IMR-90 (cell line): ENCODE measurements at regions of chr3 and their contacts with region 1.

Region 1: DNA sequence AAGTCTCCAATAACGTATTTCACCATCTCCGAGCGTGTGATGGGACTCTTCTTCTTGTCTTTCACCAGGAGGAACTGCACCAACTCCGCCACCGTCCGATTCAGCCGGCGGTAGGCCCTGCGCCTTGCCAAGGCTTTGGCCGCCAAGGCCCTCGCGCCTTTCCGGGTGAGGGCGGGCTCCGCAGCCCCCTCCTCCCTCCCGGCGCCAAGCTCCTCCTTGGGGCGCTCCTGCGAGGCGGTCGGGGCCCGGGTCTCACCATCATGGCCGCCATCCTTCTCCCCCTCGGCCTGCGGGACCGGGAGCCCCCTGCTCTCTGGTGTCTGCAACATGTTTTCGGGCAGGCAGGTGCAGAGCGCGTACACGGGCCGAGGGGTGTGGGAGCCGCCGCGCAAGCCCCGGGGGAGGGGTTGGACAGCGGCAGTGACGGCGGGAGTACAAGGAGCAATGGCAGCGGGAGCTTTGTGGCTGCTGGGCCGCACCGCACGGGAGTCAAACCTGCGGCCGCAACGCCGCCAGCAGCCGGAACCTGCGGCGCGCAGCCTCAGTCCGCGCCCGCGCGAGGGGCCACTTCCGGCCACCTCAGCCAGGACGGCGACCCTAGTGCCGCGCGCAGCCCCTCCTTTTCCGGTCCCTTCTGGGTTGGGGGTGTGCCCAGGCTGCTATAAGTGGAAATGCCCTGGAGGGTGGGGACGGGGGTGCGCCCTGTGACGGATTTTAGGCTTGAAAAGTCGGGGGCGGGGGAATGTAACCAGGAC is at the start of gene MAGEF1:
- DNase-seq: peak; percentile 81
- ATAC-seq: peak; percentile 89
- H3K4me3 ChIP-seq: peak within 1 kb of the TSS; percentile 74
- H3K27ac ChIP-seq: peak within 1 kb of the TSS; percentile 88
- H3K4me1 ChIP-seq: peaks cover 11% of the 10 kb centered on the region
- H3K27me3 ChIP-seq: no peaks in the 10 kb centered on the region
- CTCF ChIP-seq: no peak
- POLR2A ChIP-seq: peak; percentile 56; the same call in 1 of the 2 replicates
- RAD21 ChIP-seq: no peak
- total RNA-seq, gene MAGEF1: 10.6 and 16.4 TPM in 2 replicates

Region 2: DNA sequence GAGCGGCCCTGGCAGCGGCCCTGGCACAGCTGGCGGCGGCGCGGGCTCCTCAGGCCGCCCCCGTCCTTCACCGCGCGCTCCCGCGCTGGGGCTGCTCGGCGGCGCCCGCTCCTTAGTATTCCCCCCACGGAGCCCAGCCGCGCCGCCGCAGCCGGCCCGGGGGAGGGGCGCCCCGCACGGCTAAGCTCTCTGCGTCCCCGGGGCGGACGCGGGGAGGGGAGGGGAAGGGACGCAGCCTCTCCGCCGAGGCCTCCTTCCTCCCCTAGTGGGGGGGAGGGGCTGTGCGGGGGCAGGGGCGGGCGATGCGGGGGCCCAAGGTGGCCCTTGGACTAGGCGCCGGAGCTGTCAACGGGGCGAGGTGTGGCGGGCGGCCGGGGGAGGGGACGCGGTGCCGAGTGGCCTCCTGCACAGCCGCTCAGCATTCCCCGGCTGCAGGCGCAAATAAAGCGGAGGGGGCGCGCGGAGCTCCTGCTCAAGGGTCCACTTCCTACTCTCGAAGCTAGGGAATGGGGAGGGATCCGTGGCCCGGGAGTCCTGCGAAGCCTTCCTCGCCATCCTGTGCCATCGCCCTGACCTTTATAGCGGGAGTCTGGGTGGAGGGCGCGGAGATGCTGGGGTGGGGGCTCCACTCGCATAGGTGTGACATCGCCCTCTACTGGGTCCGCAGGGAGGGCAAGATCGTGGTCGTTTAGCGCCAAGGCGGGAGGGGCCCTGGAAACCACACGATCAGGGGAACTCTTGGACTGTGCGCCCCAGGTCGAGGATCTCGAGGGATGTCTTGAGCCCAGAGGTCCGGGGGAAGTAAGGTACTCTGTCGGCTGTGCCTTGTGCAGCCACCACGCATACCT is 127.9 kb before region 1 on chr3:
- CTCF ChIA-PET with region 1: no interaction called
- POLR2A ChIA-PET with region 1: no interaction called
- dilution Hi-C with region 1: no loop called
- in situ Hi-C with region 1: no loop called
- intact Hi-C with region 1: loop called (anchors 5 kb)
- DNase-seq: no peak
- ATAC-seq: no peak
- H3K4me3 ChIP-seq: no peak overlapping the region
- H3K27ac ChIP-seq: no peak overlapping the region
- H3K4me1 ChIP-seq: peaks cover 7% of the 10 kb centered on the region; the same call in 1 of the 2 replicates
- H3K27me3 ChIP-seq: peaks cover 9% of the 10 kb centered on the region
- CTCF ChIP-seq: no peak
- POLR2A ChIP-seq: no peak
- RAD21 ChIP-seq: no peak

Region 3: DNA sequence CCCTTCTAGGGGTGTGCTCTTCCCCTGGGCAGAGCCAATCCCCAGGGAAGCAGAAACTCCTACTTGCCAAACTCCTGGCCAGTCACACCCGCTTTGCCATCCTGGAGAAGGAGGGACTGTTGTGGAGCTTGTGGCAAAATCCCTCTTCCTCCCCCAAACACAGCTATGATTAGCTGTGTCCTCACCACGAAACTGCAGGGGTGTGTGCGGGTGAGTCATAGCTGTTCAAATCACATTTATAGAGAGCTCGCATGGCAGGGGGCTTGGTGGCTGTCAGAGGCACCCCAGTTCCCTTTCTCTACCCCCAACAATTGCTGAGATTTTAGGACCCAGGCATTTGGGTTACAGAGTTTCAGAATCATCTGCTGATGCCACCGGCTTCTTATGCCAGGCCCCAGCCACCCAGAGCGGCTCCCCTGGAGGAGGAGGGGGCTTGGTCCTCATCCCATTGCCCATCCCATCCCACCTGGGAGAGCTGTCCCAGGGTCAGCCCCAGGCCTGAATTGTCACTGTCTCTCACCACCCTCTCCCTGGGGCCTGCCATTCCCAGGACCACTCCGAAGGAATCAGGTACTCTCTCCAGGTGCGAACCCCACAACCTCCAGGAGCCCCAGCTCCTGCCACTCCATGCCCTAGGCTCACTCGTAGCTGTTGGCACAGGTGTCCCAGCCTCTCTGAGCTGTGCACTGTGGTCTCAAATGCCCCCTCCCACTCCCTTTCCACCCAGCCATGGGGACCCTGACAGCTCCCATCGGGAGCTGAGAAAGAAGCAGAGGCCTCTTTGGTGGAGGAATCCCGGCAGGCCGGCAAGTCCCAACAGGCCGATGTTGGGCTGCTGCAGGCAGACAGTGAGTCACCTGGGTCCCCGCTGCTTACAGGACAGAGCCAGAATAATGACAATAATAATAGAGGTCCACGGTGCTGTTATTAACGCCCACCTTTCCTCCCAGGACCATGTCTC is 29.1 kb after region 1 on chr3:
- CTCF ChIA-PET with region 1: no interaction called
- POLR2A ChIA-PET with region 1: interaction called, 28 read pairs
- dilution Hi-C with region 1: no loop called
- in situ Hi-C with region 1: no loop called
- intact Hi-C with region 1: no loop called
- DNase-seq: peak; percentile 69
- ATAC-seq: peak; percentile 79
- H3K4me3 ChIP-seq: no peak overlapping the region
- H3K27ac ChIP-seq: no peak overlapping the region
- H3K4me1 ChIP-seq: peaks cover 8% of the 10 kb centered on the region
- H3K27me3 ChIP-seq: no peaks in the 10 kb centered on the region; the same call in 1 of the 2 replicates
- CTCF ChIP-seq: no peak
- POLR2A ChIP-seq: no peak
- RAD21 ChIP-seq: no peak

Region 4: DNA sequence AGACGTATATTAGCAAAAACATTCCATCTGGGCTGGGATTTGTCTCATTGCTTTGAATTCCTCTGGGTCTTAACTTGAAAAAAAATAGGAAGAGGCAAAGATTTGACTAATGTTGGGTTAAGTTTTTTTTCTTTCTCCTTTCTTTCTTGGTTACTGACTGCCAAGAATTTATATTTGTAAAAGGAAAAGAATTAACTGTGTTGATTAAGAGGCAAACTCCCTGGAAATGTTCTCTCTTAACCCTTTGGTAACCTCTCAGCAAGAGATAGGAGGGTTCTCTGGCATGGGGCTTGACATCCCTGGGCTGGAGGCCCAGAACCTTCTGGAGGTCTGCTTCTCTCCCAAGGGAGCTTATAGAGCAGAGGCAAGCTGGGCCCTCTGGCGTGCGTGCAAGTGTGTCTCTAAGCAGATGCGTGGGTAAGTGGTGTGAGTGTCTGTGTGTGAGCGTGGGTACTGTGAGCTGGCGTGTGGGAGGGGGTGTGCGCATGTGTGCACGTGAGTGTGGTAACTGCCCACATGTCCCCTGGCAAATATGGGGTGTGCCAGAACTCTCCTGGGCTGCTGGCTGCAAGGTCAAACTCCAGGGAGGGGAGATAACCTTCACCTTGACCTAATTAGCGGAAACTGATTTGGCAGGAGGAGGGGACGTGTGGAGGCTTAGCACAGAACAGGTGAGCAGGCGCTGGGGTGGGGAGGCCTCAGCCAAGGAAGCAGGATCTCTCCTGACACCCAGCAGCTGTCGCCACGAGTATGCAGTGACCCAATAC is 49.6 kb after region 1 on chr3:
- CTCF ChIA-PET with region 1: no interaction called
- POLR2A ChIA-PET with region 1: no interaction called
- dilution Hi-C with region 1: no loop called
- in situ Hi-C with region 1: no loop called
- intact Hi-C with region 1: loop called (anchors 5 kb)
- DNase-seq: peak; percentile 85
- ATAC-seq: peak; percentile 34
- H3K4me3 ChIP-seq: no peak overlapping the region
- H3K27ac ChIP-seq: peak overlapping the region; percentile 96; the same call in 1 of the 2 replicates
- H3K4me1 ChIP-seq: peaks cover 47% of the 10 kb centered on the region
- H3K27me3 ChIP-seq: no peaks in the 10 kb centered on the region
- CTCF ChIP-seq: no peak
- POLR2A ChIP-seq: no peak
- RAD21 ChIP-seq: no peak

Region 5: DNA sequence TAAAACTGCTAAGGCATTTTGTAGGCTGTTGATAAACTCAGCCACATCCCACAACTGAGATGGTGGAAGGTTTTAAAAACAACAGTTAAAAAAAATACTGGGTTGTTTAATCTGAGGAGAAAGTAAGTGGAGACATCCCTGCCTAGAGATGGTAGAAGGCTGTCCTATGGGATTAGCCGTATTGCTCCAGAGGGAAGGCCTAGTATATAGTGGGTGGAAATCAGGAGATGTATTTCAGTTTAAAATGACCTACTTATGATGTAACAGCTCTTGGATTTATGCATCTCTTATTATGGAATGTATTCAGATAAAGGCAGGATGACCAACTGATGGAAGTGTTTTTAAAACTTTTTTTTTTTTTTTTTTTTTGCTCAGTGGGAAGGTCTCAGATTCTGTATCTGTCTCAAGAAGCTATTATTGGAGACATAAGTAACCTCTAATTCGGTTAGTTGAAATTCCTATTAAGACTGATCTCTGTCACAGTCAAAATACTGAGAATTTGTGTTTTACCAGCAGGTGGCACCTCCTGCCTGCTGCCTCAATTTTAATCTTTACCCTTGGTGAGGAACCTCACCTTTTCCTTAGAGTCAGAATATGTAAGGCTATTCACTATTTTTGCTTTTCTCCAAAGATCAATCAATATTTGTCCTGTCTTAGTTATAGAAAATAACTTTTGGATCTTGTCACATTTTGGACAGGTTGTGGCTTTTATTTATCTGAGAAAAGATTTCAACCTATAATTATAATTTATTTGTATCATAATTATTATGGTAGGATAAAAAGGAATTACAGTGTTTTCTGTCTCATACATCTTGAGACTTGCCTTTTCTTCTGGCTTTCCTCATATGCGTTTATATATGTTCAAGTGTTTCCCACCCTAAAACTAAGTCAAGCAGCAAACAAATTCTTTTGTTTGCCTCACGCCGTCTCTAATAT is 163.3 kb after region 1 on chr3:
- CTCF ChIA-PET with region 1: no interaction called
- POLR2A ChIA-PET with region 1: no interaction called
- dilution Hi-C with region 1: no loop called
- in situ Hi-C with region 1: no loop called
- intact Hi-C with region 1: no loop called
- DNase-seq: peak; percentile 32
- ATAC-seq: peak; percentile 51
- H3K4me3 ChIP-seq: no peak overlapping the region
- H3K27ac ChIP-seq: no peak overlapping the region
- H3K4me1 ChIP-seq: no peaks in the 10 kb centered on the region; the same call in 1 of the 2 replicates
- H3K27me3 ChIP-seq: no peaks in the 10 kb centered on the region
- CTCF ChIP-seq: peak; percentile 61
- POLR2A ChIP-seq: no peak
- RAD21 ChIP-seq: peak; percentile 78

Region 6: DNA sequence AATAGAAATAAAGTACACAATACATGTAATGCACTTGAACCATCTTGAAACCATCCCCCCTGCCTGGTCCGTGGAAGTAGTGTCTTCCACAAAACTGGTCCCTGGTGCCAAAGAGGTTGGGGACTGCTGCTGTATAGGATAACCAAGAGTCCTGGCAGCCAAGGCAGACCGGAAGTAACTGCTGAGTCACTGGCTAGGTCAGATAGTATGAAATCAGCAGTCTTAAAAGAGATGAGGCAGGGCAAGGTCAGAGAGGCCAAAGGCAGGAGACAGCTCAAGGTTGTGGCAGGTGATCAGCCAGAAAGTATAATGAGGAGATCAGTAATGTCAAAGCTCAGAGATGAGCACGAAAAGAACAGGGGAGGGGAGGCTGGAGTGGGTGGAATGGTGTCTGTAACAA is 711.5 kb after region 1 on chr3:
- CTCF ChIA-PET with region 1: no interaction called
- POLR2A ChIA-PET with region 1: no interaction called
- dilution Hi-C with region 1: no loop called
- in situ Hi-C with region 1: no loop called
- intact Hi-C with region 1: no loop called
- DNase-seq: peak; percentile 35
- ATAC-seq: peak; percentile 56
- H3K4me3 ChIP-seq: no peak overlapping the region
- H3K27ac ChIP-seq: no peak overlapping the region
- H3K4me1 ChIP-seq: peaks cover 2% of the 10 kb centered on the region; the same call in 1 of the 2 replicates
- H3K27me3 ChIP-seq: no peaks in the 10 kb centered on the region
- CTCF ChIP-seq: no peak
- POLR2A ChIP-seq: no peak
- RAD21 ChIP-seq: no peak